Activated T-helper 1 cell treated with anti-CD3 and anti-CD28 coated beads, Interleukin-12 subunit alpha, Interleukin-12 subunit beta, Interleukin-2, Interleukin-4 antibody, amounts not matched to agents 30 ng/mL and 10 ng/mL and 1 ng/mL, durations not matched to agents 14 hours and 24 hours and 36 hours (primary cell): ENCODE measurements at regions of chr17 and their contacts with region 1.

Region 1: DNA sequence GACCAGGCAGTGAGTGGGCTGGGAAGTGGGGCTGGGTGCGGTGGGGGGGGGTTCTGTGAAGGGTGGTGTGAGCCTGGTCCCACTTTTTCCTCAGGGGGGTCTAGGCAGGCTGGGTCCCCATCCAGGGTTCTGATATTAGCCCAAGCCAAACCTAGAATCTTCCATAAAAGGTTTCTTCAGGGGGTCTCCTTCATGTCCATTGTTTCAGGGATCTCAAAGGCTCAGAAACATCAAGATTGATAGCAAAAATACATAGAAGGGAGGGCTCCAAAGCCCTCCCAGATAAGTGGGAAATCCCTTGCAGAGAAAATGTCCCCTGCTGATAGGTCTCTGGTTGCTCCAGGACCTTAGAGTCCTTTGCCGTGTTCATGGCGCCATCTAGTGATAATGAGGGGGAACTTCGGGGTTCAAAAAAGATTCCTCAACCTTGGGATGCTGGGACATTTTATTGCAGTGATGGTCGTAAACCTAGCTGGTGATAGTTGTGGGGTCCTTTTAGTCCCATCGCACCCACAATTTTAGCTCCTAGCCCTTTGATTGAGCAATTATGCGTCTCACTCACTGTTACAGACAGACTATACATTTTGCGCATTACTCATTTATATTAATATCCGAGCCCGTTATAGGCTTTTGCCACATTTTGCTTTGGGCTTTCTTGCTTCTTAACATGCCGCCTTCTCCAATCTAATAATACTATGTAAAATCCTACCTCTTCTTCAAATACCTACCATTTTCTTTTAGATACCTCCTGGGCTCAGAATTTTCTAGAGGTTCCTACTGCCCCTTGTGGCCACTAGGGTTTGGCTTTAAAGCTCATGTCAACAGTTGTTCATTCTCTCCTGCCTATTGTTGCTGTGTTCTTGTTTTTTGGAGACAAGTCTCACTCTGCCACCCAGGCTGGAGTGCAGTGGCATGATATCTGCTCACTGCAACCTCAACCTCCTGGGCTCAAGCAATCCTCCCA is 35.1 kb downstream of the IGF2BP1 start:
- DNase-seq: peak; percentile 30
- H3K4me3 Mint-ChIP-seq: no peak overlapping the region
- H3K27ac Mint-ChIP-seq: no peak overlapping the region
- H3K4me1 Mint-ChIP-seq: no peaks in the 10 kb centered on the region
- H3K27me3 Mint-ChIP-seq: peaks cover 5% of the 10 kb centered on the region

Region 2: GRCh38 chr17:48671697-48672171 is 360.5 kb before region 1 on chr17:
- intact Hi-C with region 1: loop called (anchors 1 kb)
- DNase-seq: peak; percentile 46
- H3K4me3 Mint-ChIP-seq: peak overlapping the region; percentile 20
- H3K27ac Mint-ChIP-seq: no peak overlapping the region
- H3K4me1 Mint-ChIP-seq: peaks cover 6% of the 10 kb centered on the region
- H3K27me3 Mint-ChIP-seq: peaks cover 39% of the 10 kb centered on the region

Region 3: GRCh38 chr17:48804925-48805411 is 227.3 kb before region 1 on chr17:
- intact Hi-C with region 1: loop called (anchors 1 kb)
- DNase-seq: peak; percentile 54
- H3K4me3 Mint-ChIP-seq: no peak overlapping the region
- H3K27ac Mint-ChIP-seq: no peak overlapping the region
- H3K4me1 Mint-ChIP-seq: no peaks in the 10 kb centered on the region
- H3K27me3 Mint-ChIP-seq: peaks cover 27% of the 10 kb centered on the region

Region 4: DNA sequence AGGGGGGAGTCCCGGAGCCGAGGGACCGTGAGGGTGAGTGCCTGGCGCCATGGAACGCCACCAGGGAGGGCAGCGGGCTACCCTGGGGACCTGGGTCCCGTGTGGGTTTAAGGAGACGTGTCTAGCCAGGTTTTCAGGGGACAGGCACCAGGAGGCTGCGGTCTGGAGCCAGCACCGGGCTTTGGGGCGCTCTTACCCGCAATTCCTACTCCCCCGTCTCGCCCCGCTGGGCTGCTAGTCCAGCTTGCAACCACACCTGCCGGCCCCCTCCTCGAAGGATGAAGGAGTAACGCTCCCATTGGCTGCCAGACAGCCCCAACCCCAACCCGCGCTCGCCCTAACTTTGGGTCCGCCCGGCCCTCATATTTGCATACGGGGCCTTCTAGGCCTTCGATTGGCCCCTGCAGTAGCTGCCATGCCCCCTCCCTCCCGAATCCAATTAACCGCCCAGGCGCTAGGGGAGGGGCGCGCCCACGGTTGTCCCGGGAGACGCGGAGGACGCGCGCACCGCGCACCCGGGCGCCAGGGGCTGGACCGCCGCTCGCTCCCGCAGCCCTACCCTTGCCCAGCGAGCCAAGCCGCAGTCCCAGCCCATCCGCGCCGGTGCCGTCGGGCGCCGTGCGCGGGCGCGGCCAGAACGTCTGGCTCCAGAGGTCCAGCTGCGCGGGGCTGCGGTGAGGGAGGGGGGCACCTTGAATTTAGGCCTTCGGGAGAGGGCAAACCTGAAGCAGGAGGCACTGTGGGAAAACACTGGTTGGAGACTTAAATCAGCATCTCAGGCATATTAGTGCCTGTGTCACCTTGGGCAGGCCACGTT is 215.3 kb before region 1 on chr17 and contains the start of gene TTLL6:
- intact Hi-C with region 1: loop called (anchors 2 kb)
- DNase-seq: peak; percentile 81
- H3K4me3 Mint-ChIP-seq: peak within 1 kb of the TSS; percentile 81
- H3K27ac Mint-ChIP-seq: no peak within 1 kb of the TSS
- H3K4me1 Mint-ChIP-seq: peaks cover 18% of the 10 kb centered on the region
- H3K27me3 Mint-ChIP-seq: peaks cover 65% of the 10 kb centered on the region
- total RNA-seq, gene TTLL6: not detected in 2 replicates

Region 5: DNA sequence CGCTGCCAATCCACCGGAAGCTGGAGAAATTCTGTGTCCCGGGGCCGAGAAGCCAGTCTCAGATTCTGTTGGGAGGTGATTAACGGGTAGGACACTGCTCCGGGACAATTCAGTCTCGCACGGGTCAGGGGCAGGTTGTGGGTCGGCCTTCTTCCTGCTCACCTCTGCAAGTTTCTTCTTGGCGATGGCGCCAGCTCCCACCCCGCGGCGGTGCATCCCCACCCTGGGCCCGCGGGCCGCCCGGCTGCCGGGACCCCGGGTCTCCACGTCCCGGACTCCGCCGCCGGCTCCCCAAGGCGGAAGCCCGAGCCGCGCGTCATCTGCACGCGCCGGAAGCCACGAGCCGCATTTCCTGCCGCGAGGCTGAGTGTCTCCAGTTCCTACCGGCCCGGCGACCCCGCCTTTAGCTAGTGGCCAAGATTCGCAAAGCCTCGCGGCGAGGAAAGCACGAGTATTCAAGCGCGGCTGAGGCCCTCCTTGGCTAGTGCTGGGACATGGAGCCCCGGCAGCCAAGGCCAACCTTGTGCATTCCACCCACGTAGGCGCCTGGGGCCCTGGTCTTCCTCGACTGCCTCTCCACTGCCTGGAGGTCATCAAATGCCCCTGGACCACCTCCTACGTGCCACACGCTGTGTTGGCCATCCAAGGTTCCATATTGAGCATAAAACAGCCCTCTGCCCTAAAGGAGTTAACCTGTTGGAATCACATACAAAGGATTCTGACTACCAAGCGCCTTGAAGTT is 87.6 kb before region 1 on chr17 and contains the start of gene SNF8:
- intact Hi-C with region 1: loop called (anchors 2 kb)
- DNase-seq: peak; percentile 93
- H3K4me3 Mint-ChIP-seq: peak within 1 kb of the TSS; percentile 100
- H3K27ac Mint-ChIP-seq: peak within 1 kb of the TSS; percentile 97
- H3K4me1 Mint-ChIP-seq: peaks cover 15% of the 10 kb centered on the region
- H3K27me3 Mint-ChIP-seq: no peaks in the 10 kb centered on the region
- total RNA-seq, gene SNF8: 148 and 163 TPM in 2 replicates